CD4-positive, alpha-beta memory T cell (primary cell): ENCODE measurements at regions of chr6 and their contacts with region 1.

Region 1: DNA sequence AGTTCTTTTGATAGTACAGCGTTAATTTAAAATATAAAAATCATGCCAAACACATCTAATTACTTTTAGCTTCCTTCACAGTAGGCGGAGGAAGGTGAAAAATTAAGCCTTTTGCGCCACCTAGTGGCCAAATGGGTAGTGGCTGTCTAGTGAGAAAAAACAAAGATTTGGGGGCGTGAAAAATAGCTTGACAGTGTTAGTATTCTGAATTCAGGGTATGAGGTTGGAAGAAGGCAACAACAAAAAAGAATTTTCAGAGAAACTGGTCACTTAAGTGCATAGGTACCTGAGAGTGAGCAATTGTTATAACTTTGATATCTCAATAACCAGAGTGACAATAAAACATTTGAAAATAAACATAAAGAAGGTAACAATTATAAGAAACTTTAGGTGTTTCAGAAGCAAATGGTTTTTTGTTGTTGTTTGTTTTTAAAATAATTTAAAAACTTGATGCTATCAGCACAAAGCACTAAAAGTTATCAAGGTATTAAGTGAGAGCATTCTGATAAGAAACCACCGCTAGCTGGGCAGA is 14.3 kb downstream of the PSMB9 start:
- DNase-seq: peak; percentile 80 to 85 (median 84)
- H3K4me3 ChIP-seq: no peak overlapping the region
- H3K4me3 Mint-ChIP-seq: no peak overlapping the region
- H3K27ac ChIP-seq: no peak overlapping the region
- H3K27ac Mint-ChIP-seq: peak overlapping the region in 1 of 7 donors; percentile 0
- H3K4me1 ChIP-seq: peaks cover 21% of the 10 kb centered on the region
- H3K4me1 Mint-ChIP-seq: peaks cover 19 to 35% (median 28%) of the 10 kb centered on the region in 4 donors
- H3K27me3 ChIP-seq: no peaks in the 10 kb centered on the region
- H3K27me3 Mint-ChIP-seq: peaks cover 0 to 3% of the 10 kb centered on the region in 2 donors

Region 2: DNA sequence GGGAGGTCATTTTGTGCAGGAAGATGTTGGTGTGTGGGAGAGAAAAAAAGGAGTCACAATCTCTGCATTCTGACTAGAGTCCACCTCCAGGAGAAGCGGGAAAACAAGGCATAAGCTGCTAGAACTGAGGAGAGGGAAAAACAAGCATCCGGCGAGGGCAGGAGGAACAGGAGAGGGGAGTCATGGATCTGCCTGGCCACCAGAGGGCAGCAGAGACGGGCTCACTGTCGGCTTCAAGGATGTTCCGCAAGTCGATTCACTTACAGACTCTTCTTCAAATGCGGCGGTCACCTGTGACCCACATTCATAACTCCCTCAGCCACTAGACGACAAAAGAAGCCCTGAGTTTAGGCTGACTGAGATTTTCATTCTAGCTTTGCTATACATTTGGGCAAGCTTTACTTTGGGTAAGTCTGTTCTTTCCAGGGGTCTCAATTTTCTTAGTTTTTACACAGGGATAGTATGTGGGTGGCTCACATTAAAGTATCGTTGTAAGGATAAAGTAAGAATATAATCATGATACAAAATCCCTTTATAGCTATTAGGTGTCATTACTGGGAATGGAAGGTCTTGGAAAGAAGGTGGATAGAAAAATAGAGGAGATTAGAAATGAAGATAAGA is 454.8 kb before region 1 on chr6:
- CTCF ChIA-PET with region 1: interaction called, 19 read pairs
- POLR2A ChIA-PET with region 1: no interaction called
- intact Hi-C with region 1: loop called (anchors 2 kb)
- DNase-seq: peak; percentile 79 to 82 (median 80)
- H3K4me3 ChIP-seq: no peak overlapping the region
- H3K4me3 Mint-ChIP-seq: no peak overlapping the region
- H3K27ac ChIP-seq: no peak overlapping the region
- H3K27ac Mint-ChIP-seq: peak overlapping the region in 1 of 7 donors; percentile 43
- H3K4me1 ChIP-seq: peaks cover 3% of the 10 kb centered on the region
- H3K4me1 Mint-ChIP-seq: peaks cover 5 to 12% (median 8%) of the 10 kb centered on the region in 4 donors
- H3K27me3 ChIP-seq: peaks cover 16% of the 10 kb centered on the region
- H3K27me3 Mint-ChIP-seq: peaks cover 26 to 39% of the 10 kb centered on the region in 2 donors

Region 3: DNA sequence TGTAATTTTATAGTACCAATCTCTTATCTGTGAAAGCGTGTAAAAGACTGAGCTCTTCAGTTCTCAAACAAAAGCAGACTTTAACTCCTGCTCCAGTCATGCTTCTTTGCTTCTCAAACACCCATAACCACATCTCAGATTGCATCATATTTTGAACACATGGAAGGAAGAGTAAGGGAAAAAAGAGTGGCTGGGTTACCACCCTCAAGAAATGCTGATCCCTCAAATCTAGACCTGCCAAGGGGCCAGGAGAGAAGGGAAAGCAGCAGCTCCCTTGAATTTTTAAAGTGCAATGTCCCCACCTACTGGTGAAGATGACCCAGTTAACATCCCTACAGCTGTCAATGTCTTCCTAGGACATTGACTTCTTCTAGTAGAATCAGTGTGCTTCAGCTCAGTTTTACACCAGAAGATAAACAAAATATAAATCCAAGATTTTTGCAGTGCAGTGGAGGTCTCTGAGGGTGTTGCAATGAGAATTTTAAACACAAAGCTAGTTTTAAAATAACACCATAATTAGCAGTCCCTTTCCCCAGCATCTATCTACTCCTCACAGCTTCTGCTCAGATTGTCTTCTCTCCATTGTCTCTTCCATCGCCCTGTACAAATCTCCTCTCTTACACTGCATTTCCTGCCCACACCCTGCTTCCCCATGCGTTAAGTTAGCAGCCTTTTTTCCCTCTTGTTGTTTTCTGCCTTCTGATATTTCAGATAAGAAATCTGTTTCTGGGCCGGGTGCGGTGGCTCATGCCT is 82.4 kb before region 1 on chr6:
- CTCF ChIA-PET with region 1: interaction called, 22 read pairs
- POLR2A ChIA-PET with region 1: no interaction called
- intact Hi-C with region 1: no loop called
- DNase-seq: peak in 4 of 5 donors; percentile 34 to 47 (median 42)
- H3K4me3 ChIP-seq: no peak overlapping the region
- H3K4me3 Mint-ChIP-seq: no peak overlapping the region
- H3K27ac ChIP-seq: no peak overlapping the region
- H3K27ac Mint-ChIP-seq: peak overlapping the region in 1 of 7 donors; percentile 71
- H3K4me1 ChIP-seq: no peaks in the 10 kb centered on the region
- H3K4me1 Mint-ChIP-seq: no peaks in the 10 kb centered on the region
- H3K27me3 ChIP-seq: no peaks in the 10 kb centered on the region
- H3K27me3 Mint-ChIP-seq: peaks cover 25 to 26% of the 10 kb centered on the region in 2 donors

Region 4: DNA sequence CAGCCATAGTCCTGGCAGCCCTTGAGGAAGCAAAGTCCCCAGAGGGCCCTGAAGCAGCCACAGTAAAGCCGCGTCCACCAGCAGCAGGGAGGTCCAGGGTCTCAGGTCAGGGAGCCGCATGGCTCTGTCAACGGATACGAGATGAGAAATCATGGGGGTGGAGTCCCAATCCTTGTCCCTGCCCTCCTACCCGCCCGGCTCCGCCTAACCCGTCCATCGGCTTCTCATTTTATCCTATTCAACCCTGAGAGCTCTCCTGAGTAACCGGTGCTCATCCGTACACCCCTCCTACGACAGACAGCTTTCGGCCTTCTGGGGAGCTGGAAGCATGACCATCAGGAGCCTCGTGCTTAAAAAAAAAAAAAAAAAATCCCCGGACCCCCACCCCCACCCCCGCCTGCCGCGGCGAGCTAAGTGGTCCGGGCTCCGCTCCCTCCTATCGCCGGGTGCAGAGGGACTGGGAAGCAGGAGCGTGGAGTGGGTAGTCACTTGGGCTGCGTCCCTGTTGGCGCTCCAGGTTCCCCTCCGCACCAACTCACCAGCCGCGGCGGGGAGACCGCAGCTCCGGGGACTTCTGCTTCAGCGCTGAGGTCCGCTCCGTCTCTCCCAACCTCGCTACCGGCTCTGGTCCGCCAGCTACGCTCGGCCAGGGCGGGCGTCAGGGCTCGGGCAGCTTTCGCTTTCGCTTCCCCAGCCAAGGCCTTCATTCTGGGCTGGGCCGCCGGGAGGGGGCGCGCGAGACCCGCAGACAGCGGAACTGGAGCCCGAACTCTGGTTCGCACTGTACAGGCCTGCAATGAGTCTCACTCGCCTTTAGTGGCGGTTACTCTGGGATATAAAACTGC is 30.0 kb before region 1 on chr6 and contains the start of gene TAP2:
- CTCF ChIA-PET with region 1: interaction called, 263 read pairs
- POLR2A ChIA-PET with region 1: interaction called, 1,160 read pairs
- intact Hi-C with region 1: loop called (anchors 1 kb)
- DNase-seq: peak; percentile 95 to 99 (median 96)
- H3K4me3 ChIP-seq: peak within 1 kb of the TSS; percentile 58 to 74
- H3K4me3 Mint-ChIP-seq: peak within 1 kb of the TSS; percentile 91 to 97 (median 93)
- H3K27ac ChIP-seq: peak within 1 kb of the TSS; percentile 99
- H3K27ac Mint-ChIP-seq: peak within 1 kb of the TSS; percentile 93 to 100 (median 99)
- H3K4me1 ChIP-seq: peaks cover 83% of the 10 kb centered on the region
- H3K4me1 Mint-ChIP-seq: peaks cover 66 to 99% (median 78%) of the 10 kb centered on the region in 4 donors
- H3K27me3 ChIP-seq: no peaks in the 10 kb centered on the region
- H3K27me3 Mint-ChIP-seq: no peaks in the 10 kb centered on the region
- total RNA-seq, gene TAP2: 106 to 112 TPM

Region 5: GRCh38 chr6:32879691-32880090 is 11.4 kb after region 1 on chr6:
- CTCF ChIA-PET with region 1: interaction called, 17 read pairs
- POLR2A ChIA-PET with region 1: interaction called, 3 read pairs
- intact Hi-C with region 1: no loop called
- DNase-seq: no peak
- H3K4me3 ChIP-seq: no peak overlapping the region
- H3K4me3 Mint-ChIP-seq: no peak overlapping the region
- H3K27ac ChIP-seq: no peak overlapping the region
- H3K27ac Mint-ChIP-seq: no peak overlapping the region
- H3K4me1 ChIP-seq: no peaks in the 10 kb centered on the region
- H3K4me1 Mint-ChIP-seq: no peaks in the 10 kb centered on the region
- H3K27me3 ChIP-seq: no peaks in the 10 kb centered on the region
- H3K27me3 Mint-ChIP-seq: no peaks in the 10 kb centered on the region

Region 6: GRCh38 chr6:32952817-32953739 is 84.8 kb after region 1 on chr6 and contains the start of gene HLA-DMA:
- CTCF ChIA-PET with region 1: interaction called, 15 read pairs
- POLR2A ChIA-PET with region 1: no interaction called
- intact Hi-C with region 1: no loop called
- DNase-seq: peak; percentile 76 to 90 (median 85)
- H3K4me3 ChIP-seq: peak within 1 kb of the TSS; percentile 7 to 19
- H3K4me3 Mint-ChIP-seq: peak within 1 kb of the TSS; percentile 18 to 80 (median 68)
- H3K27ac ChIP-seq: peak within 1 kb of the TSS; percentile 31
- H3K27ac Mint-ChIP-seq: peak within 1 kb of the TSS; percentile 49 to 89 (median 82)
- H3K4me1 ChIP-seq: peaks cover 27% of the 10 kb centered on the region
- H3K4me1 Mint-ChIP-seq: peaks cover 24 to 44% (median 34%) of the 10 kb centered on the region in 4 donors
- H3K27me3 ChIP-seq: no peaks in the 10 kb centered on the region
- H3K27me3 Mint-ChIP-seq: no peaks in the 10 kb centered on the region
- total RNA-seq, gene HLA-DMA: 8.5 to 10.2 TPM

Region 7: GRCh38 chr6:33417903-33418689 is 549.8 kb after region 1 on chr6 and contains the start of gene CUTA:
- CTCF ChIA-PET with region 1: no interaction called
- POLR2A ChIA-PET with region 1: no interaction called
- intact Hi-C with region 1: no loop called
- DNase-seq: peak; percentile 97 to 100 (median 100)
- H3K4me3 ChIP-seq: peak within 1 kb of the TSS; percentile 82 to 94
- H3K4me3 Mint-ChIP-seq: peak within 1 kb of the TSS; percentile 87 to 97 (median 94)
- H3K27ac ChIP-seq: peak within 1 kb of the TSS; percentile 97
- H3K27ac Mint-ChIP-seq: peak within 1 kb of the TSS; percentile 99 to 100 (median 99)
- H3K4me1 ChIP-seq: peaks cover 72% of the 10 kb centered on the region
- H3K4me1 Mint-ChIP-seq: peaks cover 43 to 87% (median 61%) of the 10 kb centered on the region in 4 donors
- H3K27me3 ChIP-seq: no peaks in the 10 kb centered on the region
- H3K27me3 Mint-ChIP-seq: no peaks in the 10 kb centered on the region
- total RNA-seq, gene CUTA: 210 to 217 TPM